PC-9 (cell line): ENCODE measurements at regions of chr10 and their contacts with region 1.

Region 1: DNA sequence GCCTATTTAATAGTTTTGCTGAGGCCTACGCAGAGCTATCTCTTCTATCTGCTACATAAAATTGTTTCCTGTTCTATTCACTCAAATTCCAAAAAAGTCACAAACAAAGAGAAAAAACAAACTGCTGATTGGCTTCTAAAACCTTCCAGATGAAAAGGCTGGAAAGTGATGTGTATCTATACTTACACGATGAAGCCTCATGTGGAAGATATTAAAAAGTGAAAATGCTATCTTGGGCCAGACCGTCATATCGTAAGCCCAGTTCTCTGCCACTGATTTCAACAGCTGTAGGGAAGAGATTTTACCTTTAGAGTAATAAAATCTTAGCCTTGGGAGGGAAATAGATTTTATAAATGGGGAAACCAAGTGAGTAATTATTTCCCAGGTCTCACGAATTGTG is 394.8 kb downstream of the KIF20B start:
- DNase-seq: no peak
- H3K4me3 ChIP-seq: no peak overlapping the region
- H3K27ac ChIP-seq: no peak overlapping the region
- H3K4me1 ChIP-seq: no peaks in the 10 kb centered on the region
- H3K27me3 ChIP-seq: no peaks in the 10 kb centered on the region
- CTCF ChIP-seq: no peak

Region 2: DNA sequence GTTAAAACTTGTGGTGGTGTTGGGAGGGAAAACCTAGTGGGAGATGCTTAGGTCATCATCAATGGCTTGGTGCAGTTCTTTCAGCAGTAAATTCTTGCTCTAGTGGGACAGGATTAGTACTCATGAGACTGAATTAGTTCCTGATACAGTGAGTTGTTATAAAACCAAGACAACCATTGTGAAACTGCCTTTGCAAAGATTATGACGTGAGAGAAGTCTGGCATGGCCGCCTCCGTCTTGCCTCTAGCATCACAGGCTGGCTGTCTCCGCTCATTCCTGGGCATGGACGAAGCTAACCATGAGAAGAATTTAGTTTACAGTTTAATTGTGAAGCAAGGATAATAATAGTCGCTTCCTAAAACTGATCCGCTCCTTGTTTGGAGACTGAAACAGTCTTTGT is 208.4 kb before region 1 on chr10:
- CTCF ChIA-PET with region 1: no interaction called
- POLR2A ChIA-PET with region 1: no interaction called
- intact Hi-C with region 1: no loop called
- DNase-seq: no peak
- H3K4me3 ChIP-seq: no peak overlapping the region
- H3K27ac ChIP-seq: no peak overlapping the region
- H3K4me1 ChIP-seq: no peaks in the 10 kb centered on the region
- H3K27me3 ChIP-seq: no peaks in the 10 kb centered on the region
- CTCF ChIP-seq: no peak

Region 3: DNA sequence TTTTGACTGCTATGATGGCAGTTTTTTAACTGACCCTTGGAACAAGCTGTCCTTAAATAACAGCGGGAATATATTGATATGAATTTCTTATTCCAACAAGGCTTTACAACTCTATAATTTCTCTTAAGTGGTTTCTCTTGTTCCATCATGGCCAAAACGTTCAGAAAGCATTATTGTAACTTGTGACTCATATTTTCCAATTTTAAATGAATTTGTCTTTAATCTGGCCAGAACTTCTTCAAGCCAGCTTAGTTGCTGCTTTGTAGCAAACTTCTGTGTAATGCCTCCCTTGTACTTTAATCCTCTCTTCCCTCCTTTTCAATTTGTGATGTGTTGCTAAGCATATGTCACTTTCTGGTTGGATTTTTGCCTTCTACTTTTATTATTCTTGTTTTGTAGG is 122.9 kb before region 1 on chr10:
- CTCF ChIA-PET with region 1: interaction called, 10 read pairs
- POLR2A ChIA-PET with region 1: no interaction called
- intact Hi-C with region 1: no loop called
- DNase-seq: no peak
- H3K4me3 ChIP-seq: no peak overlapping the region
- H3K27ac ChIP-seq: no peak overlapping the region
- H3K4me1 ChIP-seq: no peaks in the 10 kb centered on the region
- H3K27me3 ChIP-seq: no peaks in the 10 kb centered on the region
- CTCF ChIP-seq: no peak